ENCODE measurements at regions of chr1 and their contacts with region 1.

Region 1: GRCh38 chr1:172002725-172003345 is 161.5 kb downstream of the DNM3 start:
- DNase-seq: no peak
- ATAC-seq: no peak

Region 2: GRCh38 chr1:171929121-171929520 is 73.7 kb before region 1 on chr1:
- intact Hi-C with region 1: no loop called
- DNase-seq: no peak
- ATAC-seq: no peak

Region 3: DNA sequence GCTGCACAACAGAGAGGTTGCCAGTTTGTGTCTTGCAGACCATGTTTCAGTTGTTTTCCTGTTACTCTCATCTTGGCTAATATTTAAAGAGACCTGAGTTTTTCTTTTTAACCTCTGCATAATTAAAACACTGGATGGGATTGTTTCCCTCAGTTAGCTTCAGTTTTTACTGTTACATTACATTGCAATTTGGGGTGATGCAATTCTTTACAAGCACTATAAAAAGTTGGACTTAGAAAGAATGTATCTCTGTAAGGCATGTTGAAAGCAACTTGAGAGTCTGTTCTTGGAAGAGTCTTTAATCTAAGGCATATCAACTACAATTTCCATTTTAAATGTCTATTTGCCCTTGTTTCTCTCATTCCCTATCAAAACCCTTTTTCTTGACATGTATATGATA is 62.5 kb before region 1 on chr1:
- intact Hi-C with region 1: no loop called
- DNase-seq: no peak
- ATAC-seq: no peak

Region 4: DNA sequence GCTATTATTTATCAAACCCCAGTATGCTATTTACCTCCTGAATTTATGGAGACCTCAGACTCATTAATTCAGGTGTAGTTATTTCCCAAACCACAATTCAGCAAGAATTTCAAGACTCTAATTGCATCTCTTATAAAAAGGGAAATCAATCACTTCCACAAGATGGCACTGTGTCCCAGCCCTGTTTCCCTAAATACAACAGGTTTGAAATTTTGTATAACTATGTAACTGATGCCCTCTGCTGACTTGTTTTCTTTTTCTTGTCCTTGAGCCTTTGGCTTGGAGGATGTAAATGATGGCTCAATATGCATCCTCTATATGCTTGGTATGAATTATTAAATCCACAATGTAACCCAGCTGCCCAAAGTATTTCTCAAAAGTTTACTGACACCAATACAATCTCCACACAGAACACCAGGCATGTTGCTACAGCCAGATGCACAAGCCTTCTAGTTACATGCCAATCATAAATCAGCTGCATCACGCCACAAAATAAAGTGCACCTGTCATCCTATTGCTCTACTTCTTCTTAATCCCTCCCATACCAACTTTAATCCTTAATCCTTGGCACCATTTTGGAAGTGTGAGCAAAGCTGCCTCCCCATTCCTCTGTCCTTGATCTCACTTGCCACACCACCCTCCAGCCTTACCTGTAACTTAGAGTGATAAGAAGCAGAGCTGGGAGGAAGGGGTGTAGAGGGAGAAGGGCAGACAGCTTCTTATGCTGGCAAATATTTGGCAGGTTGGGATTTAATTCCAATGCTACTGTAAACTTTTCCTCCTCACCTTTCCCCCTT is 426.7 kb after region 1 on chr1:
- intact Hi-C with region 1: loop called (anchors 10 kb)
- DNase-seq: no peak
- ATAC-seq: peak; percentile 59